Activated CD8-positive, alpha-beta T cell treated with anti-CD3 and anti-CD28 coated beads, Interleukin-2, amount 10 ng/mL, durations not matched to agents 7 days and 5 days (primary cell): ENCODE measurements at regions of chr15 and their contacts with region 1.

Region 1: DNA sequence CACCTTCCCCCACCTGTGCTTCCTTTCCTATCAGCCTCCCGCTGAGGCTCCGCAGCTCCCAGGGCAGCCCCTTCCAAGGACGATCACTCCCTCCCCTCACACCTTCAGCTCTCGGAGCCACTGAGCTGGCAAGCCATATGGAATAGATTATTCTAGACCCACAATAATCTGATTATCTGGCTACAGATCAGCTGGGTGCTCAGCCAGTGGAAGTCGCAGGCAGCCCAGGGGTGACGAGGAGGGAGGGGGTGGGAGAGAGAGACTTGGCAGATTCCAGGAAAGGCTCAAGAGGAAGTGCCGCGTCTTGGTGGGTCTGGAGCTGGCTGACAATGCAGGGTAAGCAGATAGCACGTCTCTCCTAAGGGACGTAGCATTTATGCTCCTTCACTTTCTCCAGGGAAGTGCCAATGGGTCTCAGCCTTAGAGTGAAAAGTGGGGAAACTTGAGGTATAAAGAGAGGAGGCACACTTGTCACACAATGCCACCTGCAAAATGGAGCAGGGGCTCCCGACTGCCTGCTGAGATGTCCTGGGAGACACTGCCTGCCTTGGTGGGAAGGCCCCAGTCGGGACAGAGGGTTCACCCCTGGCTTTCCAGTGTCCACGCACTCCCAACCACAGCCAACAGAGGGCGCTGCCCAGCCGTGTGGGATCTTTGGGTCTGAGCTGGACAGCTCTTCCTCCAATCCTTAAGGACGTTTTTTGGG is 9.4 kb upstream of the MESP1 start:
- DNase-seq: peak; percentile 76
- ATAC-seq: peak; percentile 84
- H3K4me3 Mint-ChIP-seq: no peak overlapping the region
- H3K27ac Mint-ChIP-seq: no peak overlapping the region
- H3K4me1 Mint-ChIP-seq: peaks cover 5% of the 10 kb centered on the region
- H3K27me3 Mint-ChIP-seq: peaks cover 8% of the 10 kb centered on the region

Region 2: GRCh38 chr15:89776274-89777072 is 16.0 kb after region 1 on chr15 and contains the start of gene MESP2:
- CTCF ChIA-PET with region 1: interaction called, 27 read pairs
- POLR2A ChIA-PET with region 1: no interaction called
- DNase-seq: peak; percentile 58
- ATAC-seq: peak; percentile 86
- H3K4me3 Mint-ChIP-seq: peak within 1 kb of the TSS; percentile 56
- H3K27ac Mint-ChIP-seq: no peak within 1 kb of the TSS
- H3K4me1 Mint-ChIP-seq: peaks cover 8% of the 10 kb centered on the region
- H3K27me3 Mint-ChIP-seq: peaks cover 24% of the 10 kb centered on the region
- total RNA-seq, gene MESP2: not detected

Region 3: GRCh38 chr15:89820666-89821611 is 60.5 kb after region 1 on chr15:
- CTCF ChIA-PET with region 1: no interaction called
- POLR2A ChIA-PET with region 1: no interaction called
- DNase-seq: no peak
- ATAC-seq: no peak
- H3K4me3 Mint-ChIP-seq: no peak overlapping the region
- H3K27ac Mint-ChIP-seq: no peak overlapping the region
- H3K4me1 Mint-ChIP-seq: no peaks in the 10 kb centered on the region
- H3K27me3 Mint-ChIP-seq: peaks cover 30% of the 10 kb centered on the region

Region 4: GRCh38 chr15:89888214-89888804 is 127.9 kb after region 1 on chr15:
- CTCF ChIA-PET with region 1: interaction called, 30 read pairs
- POLR2A ChIA-PET with region 1: no interaction called
- DNase-seq: no peak
- ATAC-seq: no peak
- H3K4me3 Mint-ChIP-seq: no peak overlapping the region
- H3K27ac Mint-ChIP-seq: no peak overlapping the region
- H3K4me1 Mint-ChIP-seq: peaks cover 21% of the 10 kb centered on the region
- H3K27me3 Mint-ChIP-seq: no peaks in the 10 kb centered on the region

Region 5: DNA sequence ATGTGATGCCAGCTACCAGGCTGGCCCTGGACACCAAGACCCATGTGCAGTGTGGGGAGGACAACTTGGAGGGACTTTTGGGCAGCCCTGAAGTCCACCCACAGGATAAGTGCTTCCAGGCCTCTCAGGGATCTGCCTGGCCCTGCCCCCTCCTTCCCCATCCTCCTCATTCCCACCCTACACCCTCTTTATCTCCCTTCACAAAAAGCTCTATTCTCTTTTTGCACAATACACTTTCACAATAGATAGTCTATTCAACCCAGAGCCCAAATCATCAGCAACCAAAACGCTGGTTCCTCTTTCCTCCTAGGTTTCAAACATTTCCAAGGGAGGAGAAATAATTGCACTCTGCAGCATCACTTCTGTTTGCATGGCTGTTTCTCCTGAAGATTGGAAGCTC is 232.9 kb after region 1 on chr15:
- CTCF ChIA-PET with region 1: no interaction called
- POLR2A ChIA-PET with region 1: no interaction called
- DNase-seq: no peak
- ATAC-seq: no peak
- H3K4me3 Mint-ChIP-seq: no peak overlapping the region
- H3K27ac Mint-ChIP-seq: no peak overlapping the region
- H3K4me1 Mint-ChIP-seq: no peaks in the 10 kb centered on the region
- H3K27me3 Mint-ChIP-seq: peaks cover 11% of the 10 kb centered on the region

Region 6: DNA sequence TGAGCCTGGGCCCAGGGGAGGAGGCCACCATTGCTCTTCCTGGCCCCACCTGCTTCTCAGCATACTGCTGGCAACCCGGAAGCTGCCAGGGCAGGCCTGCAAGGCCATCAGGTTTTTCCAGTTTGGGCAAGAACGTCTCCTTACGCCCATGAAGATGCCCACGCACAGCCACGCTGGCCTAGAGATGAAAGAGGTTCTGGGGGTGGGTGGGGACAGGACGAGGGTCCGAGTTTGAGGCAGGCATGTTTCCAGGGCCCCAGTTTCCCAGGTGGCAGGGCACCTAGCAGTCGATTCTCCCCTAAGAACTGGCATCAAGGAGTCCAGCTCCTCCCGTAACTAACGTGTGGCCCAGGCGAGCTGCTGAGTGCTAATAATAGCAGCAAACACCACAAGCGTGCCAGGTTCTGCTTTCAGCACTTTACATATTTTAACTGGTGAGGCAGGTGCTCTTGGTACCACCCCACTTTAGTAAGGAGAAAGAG is 286.5 kb after region 1 on chr15:
- CTCF ChIA-PET with region 1: no interaction called
- POLR2A ChIA-PET with region 1: no interaction called
- DNase-seq: no peak
- ATAC-seq: no peak
- H3K4me3 Mint-ChIP-seq: no peak overlapping the region
- H3K27ac Mint-ChIP-seq: peak overlapping the region; percentile 23
- H3K4me1 Mint-ChIP-seq: peaks cover 7% of the 10 kb centered on the region
- H3K27me3 Mint-ChIP-seq: no peaks in the 10 kb centered on the region

Region 7: GRCh38 chr15:90320061-90320884 is 559.8 kb after region 1 on chr15:
- CTCF ChIA-PET with region 1: no interaction called
- POLR2A ChIA-PET with region 1: no interaction called
- DNase-seq: peak; percentile 80
- ATAC-seq: peak; percentile 99
- H3K4me3 Mint-ChIP-seq: peak overlapping the region; percentile 9
- H3K27ac Mint-ChIP-seq: no peak overlapping the region
- H3K4me1 Mint-ChIP-seq: peaks cover 7% of the 10 kb centered on the region
- H3K27me3 Mint-ChIP-seq: peaks cover 2% of the 10 kb centered on the region